Heart left ventricle (tissue), 16 donors: ENCODE measurements at regions of chr1 and their contacts with region 1.

Region 1: DNA sequence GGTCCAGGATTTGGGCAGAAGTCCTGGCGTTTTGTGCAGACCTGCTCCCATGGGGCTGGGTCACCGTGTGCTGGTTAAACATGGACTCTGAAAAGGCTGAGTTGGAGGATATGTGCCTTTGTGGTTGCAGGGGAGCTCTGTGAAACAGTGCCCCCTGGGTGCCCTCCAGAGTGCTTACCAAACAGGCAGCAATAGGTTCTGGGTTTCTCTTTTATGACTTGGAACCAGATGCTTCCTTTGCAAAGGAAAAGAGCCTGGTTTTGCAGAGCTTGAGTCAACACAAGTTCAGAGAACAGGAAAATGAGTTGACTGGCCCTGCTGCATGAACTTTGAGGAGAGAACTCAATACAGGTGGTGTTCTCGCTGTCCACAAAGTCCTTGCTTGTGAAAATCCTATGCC is 288.9 kb downstream of the TM2D1 start:
- DNase-seq: no peak
- ATAC-seq: peak in 3 of 4 donors; percentile 10 to 55 (median 30)
- H3K4me3 ChIP-seq: no peak overlapping the region
- H3K27ac ChIP-seq: peak overlapping the region; percentile 32 to 84 (median 68)
- H3K4me1 ChIP-seq: peaks cover 7 to 64% (median 41%) of the 10 kb centered on the region in 12 donors
- H3K27me3 ChIP-seq: no peaks in the 10 kb centered on the region
- CTCF ChIP-seq: peak in 6 of 12 donors; percentile 7 to 38 (median 24)
- POLR2A ChIP-seq: no peak

Region 2: DNA sequence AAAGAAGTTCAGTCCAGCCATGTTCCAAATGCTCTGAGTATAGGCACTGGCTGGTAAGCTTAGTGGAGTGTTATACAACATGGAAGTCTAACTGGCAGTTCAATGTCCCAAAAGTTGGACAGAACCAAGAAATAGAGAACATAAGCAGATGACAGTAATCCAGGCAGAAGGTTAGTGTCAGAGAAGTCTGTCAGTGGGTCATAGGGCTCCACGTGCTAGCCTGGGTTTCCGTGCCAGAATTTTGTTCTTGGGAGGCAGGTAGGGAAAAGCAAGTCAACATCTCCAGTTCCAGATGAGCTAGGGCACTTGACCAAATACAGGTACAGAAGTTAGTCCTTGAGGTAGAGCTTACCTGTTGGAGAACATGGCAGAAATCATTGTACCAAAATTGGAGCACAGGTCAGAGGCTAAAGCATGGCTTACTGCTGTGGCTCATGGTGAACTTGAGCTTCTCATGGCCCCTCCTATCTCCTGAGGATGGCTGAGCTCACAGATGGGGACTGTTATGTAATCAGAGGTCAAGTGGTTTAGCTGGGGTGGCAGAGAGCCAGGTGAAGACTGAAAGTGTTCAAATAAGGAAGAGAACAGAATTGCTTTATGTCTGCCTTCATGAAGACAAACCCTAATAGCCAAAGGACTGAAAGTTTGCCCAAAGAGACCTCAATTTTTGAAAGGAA is 182.8 kb before region 1 on chr1:
- intact Hi-C with region 1: loop called in 1 of 10 experiments (anchors 10 kb)
- DNase-seq: peak in 4 of 5 donors; percentile 76 to 88 (median 80)
- ATAC-seq: peak; percentile 53 to 84 (median 76)
- H3K4me3 ChIP-seq: no peak overlapping the region
- H3K27ac ChIP-seq: peak overlapping the region in 11 of 12 donors; percentile 35 to 80 (median 74)
- H3K4me1 ChIP-seq: peaks cover 6 to 78% (median 42%) of the 10 kb centered on the region in 12 donors
- H3K27me3 ChIP-seq: no peaks in the 10 kb centered on the region
- CTCF ChIP-seq: no peak
- POLR2A ChIP-seq: no peak

Region 3: DNA sequence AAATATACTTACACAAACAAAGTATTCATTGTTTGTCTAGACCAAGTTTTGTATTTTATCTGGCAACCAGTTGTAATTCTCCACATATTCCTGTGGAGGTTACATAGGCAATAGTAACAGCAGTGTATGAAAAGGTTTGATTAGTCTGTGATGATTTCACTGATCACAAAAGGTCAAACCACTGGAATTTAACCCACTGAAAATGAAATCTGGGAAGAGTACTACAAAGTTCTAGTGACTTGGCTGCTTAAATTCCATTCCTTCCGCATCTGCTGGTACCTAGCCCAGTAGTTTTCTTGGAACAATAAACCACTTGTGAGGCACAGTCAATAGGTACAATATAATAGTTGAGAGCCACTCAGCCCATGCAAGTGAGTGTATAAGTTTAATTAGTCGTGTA is 148.3 kb before region 1 on chr1:
- intact Hi-C with region 1: no loop called
- DNase-seq: no peak
- ATAC-seq: peak in 2 of 4 donors; percentile 40 to 71
- H3K4me3 ChIP-seq: no peak overlapping the region
- H3K27ac ChIP-seq: no peak overlapping the region
- H3K4me1 ChIP-seq: peaks cover 0 to 47% (median 18%) of the 10 kb centered on the region in 12 donors
- H3K27me3 ChIP-seq: no peaks in the 10 kb centered on the region
- CTCF ChIP-seq: no peak
- POLR2A ChIP-seq: no peak

Region 4: DNA sequence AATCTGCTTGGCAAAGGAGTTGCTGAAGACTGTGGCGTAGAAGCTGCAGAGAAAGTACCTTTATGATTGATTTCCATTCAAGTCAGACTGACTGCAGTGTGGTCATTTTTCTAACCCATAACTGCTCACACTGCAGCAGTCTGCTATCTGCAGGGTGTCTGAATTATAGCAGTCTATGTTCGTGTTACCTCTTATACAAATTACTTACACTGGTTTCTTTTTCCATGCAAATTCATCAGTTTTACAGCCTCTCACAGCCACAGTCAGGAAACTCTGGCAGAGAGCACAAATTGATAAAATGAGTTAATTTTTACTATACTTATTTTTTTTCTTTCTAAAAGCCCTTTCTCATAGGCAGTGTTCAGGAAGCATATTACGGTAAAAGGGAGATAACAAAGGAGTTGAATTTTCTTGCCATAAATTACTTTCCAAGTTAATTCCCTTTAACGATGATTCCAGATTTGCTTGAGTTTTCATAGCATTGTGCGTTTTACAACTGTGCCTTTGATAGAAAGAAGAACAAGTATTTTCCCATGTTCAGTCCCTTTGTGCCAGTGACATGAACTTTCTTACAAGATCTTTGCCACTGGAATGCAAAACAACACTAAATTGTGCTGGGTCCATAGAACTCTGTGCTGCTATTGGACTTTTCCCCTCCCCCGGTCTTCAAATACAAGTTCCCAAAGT is 92.1 kb before region 1 on chr1:
- intact Hi-C with region 1: loop called in 2 of 10 experiments (anchors 5 kb)
- DNase-seq: no peak
- ATAC-seq: peak in 1 of 4 donors; percentile 14
- H3K4me3 ChIP-seq: no peak overlapping the region
- H3K27ac ChIP-seq: peak overlapping the region in 7 of 12 donors; percentile 10 to 44 (median 25)
- H3K4me1 ChIP-seq: peaks cover 0 to 44% (median 20%) of the 10 kb centered on the region in 12 donors
- H3K27me3 ChIP-seq: no peaks in the 10 kb centered on the region
- CTCF ChIP-seq: no peak
- POLR2A ChIP-seq: no peak

Region 5: DNA sequence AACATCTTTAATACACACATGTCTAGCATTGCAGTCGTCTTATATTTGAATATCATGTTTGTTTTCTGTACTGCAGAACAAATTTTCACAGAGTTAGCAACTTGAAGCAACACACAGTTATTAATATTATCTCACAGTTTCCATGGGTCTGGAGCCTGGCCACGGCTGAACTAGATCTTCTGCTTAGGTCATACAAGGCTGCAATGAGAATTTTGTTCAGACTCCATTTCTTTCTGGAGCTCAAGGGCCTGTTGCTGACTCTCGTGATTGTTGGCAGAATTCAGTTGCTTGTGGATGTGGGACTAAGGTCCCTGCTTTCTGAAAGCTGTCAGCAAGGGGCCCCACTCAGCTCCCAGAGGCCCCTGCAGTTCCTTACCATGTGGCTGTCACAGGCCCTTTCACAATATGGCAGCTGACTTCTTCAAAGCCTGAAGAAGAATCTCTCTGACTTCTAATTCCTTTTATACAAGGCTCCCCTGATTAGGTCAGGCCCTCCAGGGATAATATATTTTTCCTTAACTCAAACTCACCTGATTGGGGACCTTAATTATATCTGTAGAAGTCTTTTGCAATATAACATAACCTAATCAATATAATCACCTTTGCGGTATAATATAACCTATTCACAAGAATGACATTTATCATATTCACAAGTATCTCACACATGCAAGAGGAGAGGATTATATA is 57.4 kb before region 1 on chr1:
- intact Hi-C with region 1: loop called in 1 of 10 experiments (anchors 5 kb)
- DNase-seq: peak in 1 of 5 donors; percentile 26
- ATAC-seq: peak in 2 of 4 donors; percentile 30 to 39
- H3K4me3 ChIP-seq: no peak overlapping the region
- H3K27ac ChIP-seq: peak overlapping the region in 11 of 12 donors; percentile 3 to 74 (median 33)
- H3K4me1 ChIP-seq: peaks cover 0 to 38% (median 13%) of the 10 kb centered on the region in 12 donors
- H3K27me3 ChIP-seq: no peaks in the 10 kb centered on the region
- CTCF ChIP-seq: no peak
- POLR2A ChIP-seq: no peak

Region 6: GRCh38 chr1:61472876-61473275 is 36.9 kb after region 1 on chr1:
- intact Hi-C with region 1: no loop called
- DNase-seq: no peak
- ATAC-seq: no peak
- H3K4me3 ChIP-seq: no peak overlapping the region
- H3K27ac ChIP-seq: no peak overlapping the region
- H3K4me1 ChIP-seq: no peaks in the 10 kb centered on the region
- H3K27me3 ChIP-seq: no peaks in the 10 kb centered on the region
- CTCF ChIP-seq: no peak
- POLR2A ChIP-seq: no peak

Region 7: DNA sequence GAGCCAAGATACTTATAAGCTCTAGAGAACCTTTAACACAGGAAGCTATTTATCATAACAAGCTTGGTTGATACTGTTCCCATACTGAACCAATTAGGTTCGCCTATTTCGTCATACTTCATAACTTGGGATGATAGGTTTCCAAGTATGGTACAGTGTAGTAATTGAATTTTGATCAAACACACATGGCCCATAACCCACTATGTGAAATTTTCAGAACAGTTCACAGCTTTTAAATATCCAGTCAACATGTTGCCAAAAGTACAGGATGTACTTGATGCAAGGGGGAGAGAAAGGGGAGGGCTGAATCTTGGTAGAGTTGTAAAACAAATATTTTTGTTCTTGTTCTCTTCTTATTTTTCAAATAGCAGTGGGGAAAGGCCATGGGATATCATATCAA is 202.3 kb after region 1 on chr1:
- intact Hi-C with region 1: no loop called
- DNase-seq: no peak
- ATAC-seq: peak; percentile 59 to 83 (median 78)
- H3K4me3 ChIP-seq: no peak overlapping the region
- H3K27ac ChIP-seq: peak overlapping the region in 9 of 12 donors; percentile 48 to 88 (median 68)
- H3K4me1 ChIP-seq: peaks cover 0 to 46% (median 10%) of the 10 kb centered on the region in 12 donors
- H3K27me3 ChIP-seq: no peaks in the 10 kb centered on the region
- CTCF ChIP-seq: no peak
- POLR2A ChIP-seq: no peak